HepG2 (cell line): ENCODE measurements at regions of chr3 and their contacts with region 1.

Region 1: GRCh38 chr3:196665962-196666867 is 26.7 kb downstream of the NRROS start:
- DNase-seq: peak; percentile 91
- ATAC-seq: peak; percentile 88
- H3K4me3 ChIP-seq: peak overlapping the region; percentile 1 to 52 (median 15); a peak in 2 of 6 replicates
- H3K27ac ChIP-seq: peak overlapping the region; percentile 40
- H3K4me1 ChIP-seq: peaks cover 34% of the 10 kb centered on the region
- H3K27me3 ChIP-seq: peaks cover 0 to 7% of the 10 kb centered on the region in 2 experiments; a peak in 2 of 5 replicates
- CTCF ChIP-seq: 0 out of 2 replicates have a peak, but pooled peaks have one; percentile 6
- EP300 ChIP-seq: no peak
- POLR2A ChIP-seq: no peak
- RAD21 ChIP-seq: no peak

Region 2: DNA sequence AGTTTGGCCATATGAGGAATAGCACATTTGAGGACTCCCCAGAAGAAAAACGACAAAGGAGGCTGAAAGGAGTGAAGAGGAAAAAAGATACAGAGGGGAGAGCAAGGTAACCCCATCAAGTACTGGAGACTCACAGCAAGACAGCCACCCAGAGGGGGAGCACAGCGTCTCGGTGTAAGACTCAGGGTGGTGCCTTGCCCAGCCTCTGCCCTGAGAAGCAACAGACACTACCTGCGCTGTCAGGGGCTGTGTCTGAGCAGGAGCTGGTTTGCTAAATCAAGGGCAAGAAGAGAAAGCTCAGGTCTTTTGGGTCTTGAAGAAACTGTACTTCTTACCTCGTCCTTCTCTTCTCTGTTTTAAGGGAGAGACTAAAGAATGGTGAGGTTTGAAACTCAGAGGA is 69.9 kb before region 1 on chr3:
- CTCF ChIA-PET with region 1: no interaction called
- POLR2A ChIA-PET with region 1: no interaction called
- in situ Hi-C with region 1: no loop called
- intact Hi-C with region 1: no loop called
- DNase-seq: no peak
- ATAC-seq: peak; percentile 63
- H3K4me3 ChIP-seq: no peak overlapping the region
- H3K27ac ChIP-seq: no peak overlapping the region
- H3K4me1 ChIP-seq: peaks cover 30% of the 10 kb centered on the region
- H3K27me3 ChIP-seq: peaks cover 2 to 15% of the 10 kb centered on the region in 2 experiments; a peak in 3 of 5 replicates
- CTCF ChIP-seq: no peak
- EP300 ChIP-seq: no peak
- POLR2A ChIP-seq: no peak
- RAD21 ChIP-seq: no peak

Region 3: DNA sequence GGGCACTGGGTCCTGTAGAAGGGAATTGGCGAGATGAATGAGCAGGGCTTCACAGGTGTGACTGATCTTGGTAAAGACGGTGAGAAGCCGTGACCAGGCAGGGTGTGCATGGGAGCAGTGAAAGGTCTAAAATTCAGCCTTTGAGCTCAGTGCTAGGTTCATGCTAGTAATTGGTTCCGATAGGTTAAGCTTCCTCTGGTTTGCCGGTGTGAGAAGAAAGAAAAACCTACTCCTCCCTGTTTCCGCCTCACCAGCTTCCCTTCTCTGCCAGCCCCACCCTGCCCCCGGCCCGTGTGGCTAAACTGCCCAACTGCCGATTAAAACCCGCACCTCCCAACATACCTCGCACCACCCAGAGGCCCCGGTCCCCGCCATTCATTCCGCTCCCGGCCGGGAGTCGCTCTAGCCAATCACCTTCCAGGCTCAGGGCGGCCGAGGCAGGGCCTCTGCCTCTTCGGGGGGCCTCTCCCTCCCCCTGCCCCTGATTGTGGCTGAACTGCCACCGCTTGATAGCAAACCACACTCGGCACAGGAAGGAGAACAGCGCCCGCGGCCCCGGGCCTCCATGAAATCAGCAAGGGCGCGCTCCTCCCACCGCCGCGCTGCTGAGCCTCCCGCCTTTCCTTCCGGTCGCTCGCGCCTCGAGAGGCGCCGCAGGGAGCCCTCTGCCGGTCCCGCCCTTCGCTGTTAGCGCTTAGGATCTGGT is 34.0 kb before region 1 on chr3:
- CTCF ChIA-PET with region 1: no interaction called
- POLR2A ChIA-PET with region 1: interaction called, 3 read pairs
- in situ Hi-C with region 1: no loop called
- intact Hi-C with region 1: loop called (anchors 1 kb)
- DNase-seq: peak; percentile 54
- ATAC-seq: peak; percentile 88
- H3K4me3 ChIP-seq: peak overlapping the region; percentile 59 to 73 (median 67)
- H3K27ac ChIP-seq: peak overlapping the region; percentile 73
- H3K4me1 ChIP-seq: peaks cover 39% of the 10 kb centered on the region
- H3K27me3 ChIP-seq: peaks cover 2 to 8% of the 10 kb centered on the region in 2 experiments; a peak in 3 of 5 replicates
- CTCF ChIP-seq: peak; percentile 65
- EP300 ChIP-seq: no peak
- POLR2A ChIP-seq: peak; percentile 46 to 55
- RAD21 ChIP-seq: peak; percentile 31; the same call in 1 of the 2 replicates

Region 4: DNA sequence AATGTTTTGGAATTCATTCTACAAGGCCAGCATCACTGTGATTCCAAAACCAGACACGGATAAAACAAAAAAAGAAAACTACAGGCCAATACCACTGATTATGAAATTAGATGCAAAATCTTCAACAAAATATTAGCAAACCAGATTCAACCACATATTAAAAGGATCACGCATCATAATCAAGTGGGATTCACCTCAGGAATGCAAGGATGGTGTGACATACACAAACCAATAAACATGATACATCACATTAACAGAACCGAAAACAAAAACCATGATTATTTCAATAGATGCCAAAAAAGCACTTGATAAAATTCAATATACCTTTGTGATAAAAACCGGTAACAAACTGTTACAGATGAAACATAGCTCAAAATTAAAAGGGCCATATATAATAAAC is 583.3 kb after region 1 on chr3:
- CTCF ChIA-PET with region 1: no interaction called
- POLR2A ChIA-PET with region 1: no interaction called
- in situ Hi-C with region 1: no loop called
- intact Hi-C with region 1: loop called (anchors 5 kb)
- DNase-seq: no peak
- ATAC-seq: no peak
- H3K4me3 ChIP-seq: no peak overlapping the region
- H3K27ac ChIP-seq: no peak overlapping the region
- H3K4me1 ChIP-seq: no peaks in the 10 kb centered on the region
- H3K27me3 ChIP-seq: no peaks in the 10 kb centered on the region
- CTCF ChIP-seq: no peak
- EP300 ChIP-seq: no peak
- POLR2A ChIP-seq: no peak
- RAD21 ChIP-seq: no peak